ENCODE measurements at regions of chr2 and their contacts with region 1.

Region 1: DNA sequence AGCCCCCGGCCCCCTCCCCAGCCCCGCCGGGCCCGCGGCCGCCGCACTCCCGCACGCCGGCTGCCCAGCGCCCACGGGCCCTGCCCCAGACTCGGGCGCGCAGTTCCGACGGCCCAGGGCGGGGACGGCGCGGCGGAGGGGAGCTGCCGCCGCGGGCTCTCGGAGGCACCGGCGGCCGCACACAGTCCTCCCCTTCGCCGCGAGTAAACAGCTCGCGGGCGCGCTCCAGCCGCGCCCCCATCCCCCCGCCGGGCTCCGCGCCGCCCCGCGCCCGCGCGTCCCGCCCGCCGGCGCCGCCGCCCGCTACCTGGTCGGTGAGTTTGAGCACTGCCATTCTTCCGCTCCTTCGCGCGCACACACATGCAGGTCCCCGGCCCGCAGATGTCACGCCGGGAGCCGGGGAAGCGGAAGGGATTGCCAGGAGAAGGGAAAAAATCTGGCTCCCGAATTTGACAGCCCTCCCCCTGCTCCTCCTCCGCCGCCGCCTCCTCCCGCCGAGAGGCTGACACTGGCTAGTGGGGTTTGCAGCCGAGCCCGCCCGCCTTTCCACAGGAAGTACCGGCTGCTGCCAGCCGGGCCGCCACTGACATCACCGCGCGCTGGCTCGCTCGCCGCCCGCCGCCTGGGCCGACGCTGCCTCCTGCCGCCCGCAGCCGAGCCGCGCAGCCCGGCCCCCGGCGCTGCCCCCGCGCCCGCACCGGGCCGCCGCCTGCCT is at the start of gene ANKRD44:
- DNase-seq: peak; percentile 76 to 84 (median 82)
- H3K4me3 ChIP-seq: peak within 1 kb of the TSS; percentile 77 to 99 (median 77)
- H3K4me3 Mint-ChIP-seq: peak within 1 kb of the TSS; percentile 93 to 97
- H3K27ac ChIP-seq: peak within 1 kb of the TSS; percentile 78 to 97
- H3K27ac Mint-ChIP-seq: peak within 1 kb of the TSS; percentile 91 to 98 (median 96)
- H3K4me1 ChIP-seq: peaks cover 43 to 48% of the 10 kb centered on the region in 2 donors
- H3K4me1 Mint-ChIP-seq: peaks cover 50% of the 10 kb centered on the region
- H3K27me3 ChIP-seq: no peaks in the 10 kb centered on the region
- H3K27me3 Mint-ChIP-seq: peaks cover 0 to 4% (median 0%) of the 10 kb centered on the region in 3 donors
- CTCF ChIP-seq: peak; percentile 26
- polyA plus RNA-seq, gene ANKRD44: 55.7 to 91.9 (median 64.9) TPM

Region 2: GRCh38 chr2:197113275-197113711 is 197.1 kb before region 1 on chr2:
- intact Hi-C with region 1: loop called in 1 of 2 experiments (anchors 10 kb)
- DNase-seq: peak in 2 of 3 donors; percentile 25 to 53
- H3K4me3 ChIP-seq: no peak overlapping the region
- H3K4me3 Mint-ChIP-seq: no peak overlapping the region
- H3K27ac ChIP-seq: peak overlapping the region in 1 of 2 donors; percentile 29
- H3K27ac Mint-ChIP-seq: peak overlapping the region in 2 of 7 donors; percentile 55 to 62
- H3K4me1 ChIP-seq: no peaks in the 10 kb centered on the region
- H3K4me1 Mint-ChIP-seq: no peaks in the 10 kb centered on the region
- H3K27me3 ChIP-seq: no peaks in the 10 kb centered on the region
- H3K27me3 Mint-ChIP-seq: no peaks in the 10 kb centered on the region
- CTCF ChIP-seq: peak; percentile 83

Region 3: DNA sequence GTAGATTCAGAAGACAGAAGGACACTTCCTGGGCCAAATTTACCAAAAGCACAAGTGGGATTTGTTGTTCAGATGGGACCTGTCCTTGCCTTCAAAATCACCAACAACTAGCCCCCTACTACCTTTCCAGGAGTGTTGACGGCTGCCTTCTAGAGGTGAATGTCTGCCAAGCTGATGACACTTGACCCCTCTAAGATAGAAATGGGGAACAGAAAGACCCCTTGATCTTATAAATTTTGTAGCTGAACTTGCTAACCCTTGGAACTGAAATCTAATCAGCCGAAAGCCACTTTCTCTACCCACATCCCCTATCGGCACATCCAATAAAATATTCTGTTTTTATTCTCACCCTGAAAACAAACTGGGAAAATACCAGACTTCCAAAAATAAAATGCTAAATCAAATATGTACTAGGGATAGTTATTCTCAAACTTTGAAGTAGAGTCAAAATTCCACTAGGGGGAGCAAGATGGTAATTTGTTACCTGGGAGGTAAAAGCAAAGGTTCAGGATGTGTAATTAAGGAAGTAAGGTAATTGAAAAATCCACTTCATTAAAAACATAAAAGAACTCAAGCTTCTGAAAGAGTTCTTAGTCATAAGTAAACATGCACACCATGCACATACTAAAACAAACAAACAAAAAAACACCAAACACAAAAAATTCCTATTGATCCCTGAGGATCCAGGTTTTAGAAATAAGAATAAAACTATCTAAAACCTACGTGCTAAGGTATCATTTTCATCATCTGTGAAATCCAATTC is 119.1 kb before region 1 on chr2:
- intact Hi-C with region 1: loop called (anchors 5 kb)
- DNase-seq: peak; percentile 34 to 71 (median 60)
- H3K4me3 ChIP-seq: no peak overlapping the region
- H3K4me3 Mint-ChIP-seq: no peak overlapping the region
- H3K27ac ChIP-seq: no peak overlapping the region
- H3K27ac Mint-ChIP-seq: peak overlapping the region in 2 of 7 donors; percentile 1 to 6
- H3K4me1 ChIP-seq: peaks cover 10 to 18% of the 10 kb centered on the region in 2 donors
- H3K4me1 Mint-ChIP-seq: peaks cover 31% of the 10 kb centered on the region
- H3K27me3 ChIP-seq: no peaks in the 10 kb centered on the region
- H3K27me3 Mint-ChIP-seq: peaks cover 0 to 1% (median 0%) of the 10 kb centered on the region in 3 donors
- CTCF ChIP-seq: peak; percentile 84

Region 4: DNA sequence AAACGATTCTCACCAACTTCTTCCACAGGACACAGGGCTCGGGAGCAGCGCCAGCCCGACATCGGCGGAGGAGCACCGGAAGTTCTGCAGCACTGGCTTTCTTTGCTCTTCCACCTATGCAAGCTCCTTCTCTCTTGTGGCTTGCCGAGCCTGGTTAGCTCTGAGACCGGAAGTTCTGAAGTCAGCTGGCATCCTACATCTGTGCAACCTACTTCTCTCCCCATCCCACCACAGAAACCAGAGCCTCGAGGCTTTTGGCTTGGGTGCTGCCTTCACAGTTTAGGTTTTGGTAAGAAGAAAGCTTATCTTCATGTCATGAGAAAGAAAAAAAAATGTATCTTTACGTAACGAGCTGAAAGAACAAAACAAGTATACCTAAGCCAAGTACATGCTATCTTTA is 111.5 kb before region 1 on chr2:
- intact Hi-C with region 1: loop called (anchors 5 kb)
- DNase-seq: peak; percentile 60 to 73 (median 67)
- H3K4me3 ChIP-seq: peak overlapping the region; percentile 1 to 68 (median 28)
- H3K4me3 Mint-ChIP-seq: peak overlapping the region; percentile 76 to 91
- H3K27ac ChIP-seq: peak overlapping the region; percentile 59 to 83
- H3K27ac Mint-ChIP-seq: peak overlapping the region; percentile 76 to 95 (median 90)
- H3K4me1 ChIP-seq: peaks cover 52 to 69% of the 10 kb centered on the region in 2 donors
- H3K4me1 Mint-ChIP-seq: peaks cover 66% of the 10 kb centered on the region
- H3K27me3 ChIP-seq: no peaks in the 10 kb centered on the region
- H3K27me3 Mint-ChIP-seq: peaks cover 0 to 3% (median 0%) of the 10 kb centered on the region in 3 donors
- CTCF ChIP-seq: no peak

Region 5: GRCh38 chr2:197216361-197216979 is 94.0 kb before region 1 on chr2:
- intact Hi-C with region 1: loop called in 1 of 2 experiments (anchors 5 kb)
- DNase-seq: peak; percentile 44 to 65 (median 59)
- H3K4me3 ChIP-seq: peak overlapping the region in 1 of 3 experiments; percentile 56
- H3K4me3 Mint-ChIP-seq: peak overlapping the region; percentile 63 to 84
- H3K27ac ChIP-seq: peak overlapping the region; percentile 37 to 86
- H3K27ac Mint-ChIP-seq: peak overlapping the region; percentile 91 to 99 (median 97)
- H3K4me1 ChIP-seq: peaks cover 69 to 80% of the 10 kb centered on the region in 2 donors
- H3K4me1 Mint-ChIP-seq: peaks cover 73% of the 10 kb centered on the region
- H3K27me3 ChIP-seq: no peaks in the 10 kb centered on the region
- H3K27me3 Mint-ChIP-seq: no peaks in the 10 kb centered on the region
- CTCF ChIP-seq: no peak

Region 6: GRCh38 chr2:197255543-197255942 is 54.9 kb before region 1 on chr2:
- intact Hi-C with region 1: loop called (anchors 2 to 5 kb)
- DNase-seq: peak; percentile 90 to 96 (median 93)
- H3K4me3 ChIP-seq: peak overlapping the region; percentile 24 to 68 (median 50)
- H3K4me3 Mint-ChIP-seq: peak overlapping the region; percentile 68 to 89
- H3K27ac ChIP-seq: peak overlapping the region; percentile 89 to 95
- H3K27ac Mint-ChIP-seq: peak overlapping the region; percentile 98 to 100 (median 99)
- H3K4me1 ChIP-seq: peaks cover 60 to 67% of the 10 kb centered on the region in 2 donors
- H3K4me1 Mint-ChIP-seq: peaks cover 64% of the 10 kb centered on the region
- H3K27me3 ChIP-seq: no peaks in the 10 kb centered on the region
- H3K27me3 Mint-ChIP-seq: peaks cover 0 to 2% (median 0%) of the 10 kb centered on the region in 3 donors
- CTCF ChIP-seq: no peak